Activated CD4-positive, alpha-beta T cell treated with anti-CD3 and anti-CD28 coated beads for 36 hours (primary cell): ENCODE measurements at regions of chr9 and their contacts with region 1.

Region 1: DNA sequence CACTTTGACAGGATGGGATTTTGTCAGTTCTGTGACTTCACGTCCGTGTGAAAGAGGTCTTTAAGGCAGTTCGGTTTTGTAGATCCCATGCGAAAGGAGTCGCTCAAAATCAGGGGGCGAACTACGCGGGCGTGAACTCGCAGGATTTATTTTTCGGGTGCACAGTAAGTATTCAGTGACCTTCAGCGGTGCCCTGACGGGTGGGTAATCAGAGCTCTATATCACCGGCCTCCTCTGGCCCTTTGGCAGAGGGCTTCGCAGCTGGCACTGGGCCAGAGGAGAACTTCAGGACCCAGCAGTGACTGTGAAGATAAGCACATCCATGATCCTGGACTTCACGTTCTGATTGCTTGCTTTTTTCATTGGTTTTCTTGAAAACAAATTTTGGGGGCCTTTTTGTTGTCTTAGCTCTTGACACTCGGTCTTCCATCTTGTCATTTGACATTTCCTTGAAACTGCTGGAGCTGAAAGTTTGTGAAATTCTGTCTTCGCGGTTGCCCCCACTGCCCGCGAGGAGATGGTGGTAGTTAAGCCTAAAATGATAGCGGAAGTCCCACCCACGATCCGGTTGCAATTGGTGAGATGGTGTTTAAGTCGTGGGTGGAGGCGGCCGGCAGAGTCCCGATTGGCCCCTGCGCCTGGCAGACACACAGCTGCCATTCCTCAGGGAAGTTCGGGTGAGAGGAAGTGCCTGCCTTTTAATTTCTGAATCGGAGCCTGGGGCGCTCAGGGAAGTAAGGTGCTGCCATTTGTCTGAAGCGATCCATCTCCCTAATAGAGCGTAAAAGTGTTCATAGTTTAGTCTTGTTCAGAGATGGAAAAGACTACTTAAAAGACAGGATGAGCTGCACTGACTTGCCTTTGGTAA is at the start of gene FAM120AOS:
- DNase-seq: peak; percentile 92
- ATAC-seq: peak; percentile 68
- H3K4me3 Mint-ChIP-seq: peak within 1 kb of the TSS; percentile 89
- H3K27ac Mint-ChIP-seq: peak within 1 kb of the TSS; percentile 96
- H3K4me1 Mint-ChIP-seq: peaks cover 47% of the 10 kb centered on the region
- H3K27me3 Mint-ChIP-seq: no peaks in the 10 kb centered on the region
- total RNA-seq, gene FAM120AOS: 38.7 to 43.1 TPM

Region 2: DNA sequence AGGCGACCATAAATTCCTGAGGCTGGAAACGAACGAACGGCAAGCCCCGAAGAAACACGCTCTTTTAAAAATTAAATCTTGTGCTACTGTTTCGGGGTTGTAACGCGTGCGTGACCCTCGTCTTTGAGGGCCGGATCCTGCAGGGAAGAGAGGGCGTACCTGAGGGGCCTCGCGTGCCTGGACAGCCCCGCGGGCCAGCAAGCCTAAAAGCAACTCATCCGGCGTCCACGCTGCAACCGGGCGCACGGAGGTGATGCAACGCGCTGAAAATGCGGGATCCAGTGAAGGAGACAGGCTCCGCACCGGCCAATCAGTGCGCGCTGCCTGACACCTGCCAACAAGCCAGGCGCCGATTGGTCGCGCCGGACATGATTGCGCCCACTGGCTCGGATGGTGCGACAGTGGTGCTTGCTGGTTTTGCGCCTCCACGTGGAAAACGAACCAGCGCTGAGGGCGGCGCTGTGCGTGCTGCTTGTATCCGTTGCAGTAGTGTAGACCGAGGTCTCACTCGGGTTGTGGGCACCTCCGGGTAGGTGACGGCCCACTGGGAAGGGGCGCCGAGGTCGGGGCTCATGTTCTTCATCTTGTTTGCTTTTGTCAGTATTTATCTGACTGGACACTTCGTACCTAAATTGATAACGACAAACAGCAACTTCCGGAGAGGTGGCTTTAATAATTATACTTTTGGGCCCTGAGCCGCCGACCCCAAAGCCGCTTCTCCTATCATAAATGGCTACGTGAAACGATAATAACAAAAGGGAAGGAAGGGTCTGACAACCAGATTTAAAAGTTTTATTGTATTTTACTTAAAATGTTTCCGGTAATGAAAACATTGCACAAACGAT is 1159.6 kb before region 1 on chr9 and contains the start of gene IARS1:
- CTCF ChIA-PET with region 1: no interaction called
- POLR2A ChIA-PET with region 1: no interaction called
- intact Hi-C with region 1: loop called in 1 of 2 experiments (anchors 10 kb)
- DNase-seq: peak; percentile 99
- ATAC-seq: peak; percentile 95
- H3K4me3 Mint-ChIP-seq: peak within 1 kb of the TSS; percentile 87
- H3K27ac Mint-ChIP-seq: peak within 1 kb of the TSS; percentile 98
- H3K4me1 Mint-ChIP-seq: peaks cover 56% of the 10 kb centered on the region
- H3K27me3 Mint-ChIP-seq: no peaks in the 10 kb centered on the region
- total RNA-seq, gene IARS1: 261 to 286 TPM

Region 3: GRCh38 chr9:92764988-92765936 is 688.0 kb before region 1 on chr9:
- CTCF ChIA-PET with region 1: no interaction called
- POLR2A ChIA-PET with region 1: no interaction called
- intact Hi-C with region 1: loop called in 1 of 2 experiments (anchors 2 kb)
- DNase-seq: peak; percentile 99
- ATAC-seq: peak; percentile 95
- H3K4me3 Mint-ChIP-seq: peak overlapping the region; percentile 89
- H3K27ac Mint-ChIP-seq: peak overlapping the region; percentile 90
- H3K4me1 Mint-ChIP-seq: peaks cover 47% of the 10 kb centered on the region
- H3K27me3 Mint-ChIP-seq: no peaks in the 10 kb centered on the region

Region 4: DNA sequence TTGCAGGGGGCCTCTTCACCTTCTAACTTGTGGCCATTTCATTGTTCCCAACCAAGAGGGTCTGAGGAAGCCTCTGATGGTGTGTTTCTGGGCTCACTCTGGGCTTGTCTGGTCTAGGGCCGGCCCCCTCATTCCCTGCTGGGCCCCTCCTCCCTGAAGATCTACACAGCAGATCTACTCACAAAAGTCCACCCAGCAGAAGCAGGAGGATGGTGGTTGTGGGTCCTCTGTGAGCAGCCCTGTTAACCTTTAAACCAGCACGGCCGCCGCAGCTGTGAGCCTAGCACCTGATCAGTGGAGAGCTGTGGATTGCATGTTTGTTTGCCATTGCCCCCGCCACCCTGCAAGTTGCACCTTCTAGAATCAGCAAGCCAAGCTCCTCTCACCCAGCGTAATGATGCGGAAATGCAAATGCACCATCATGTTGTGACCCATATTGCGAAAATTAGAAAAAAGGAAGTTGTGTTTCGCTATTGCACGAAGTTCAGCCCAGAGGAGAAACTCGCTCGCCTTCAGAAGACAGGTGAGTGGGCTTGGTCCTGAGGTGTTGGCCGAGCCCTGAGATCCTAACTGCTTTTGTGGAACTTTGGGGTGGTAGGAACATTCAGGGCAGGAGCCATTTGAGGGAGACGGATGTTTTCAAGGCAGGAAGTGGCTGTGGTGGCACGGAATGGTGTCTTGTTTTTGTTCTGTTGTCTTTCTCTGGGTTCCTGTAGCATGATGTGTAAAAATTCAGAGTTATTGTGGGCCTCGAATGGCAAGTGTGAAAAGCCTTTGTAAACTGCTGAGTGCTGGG is 489.3 kb before region 1 on chr9:
- CTCF ChIA-PET with region 1: no interaction called
- POLR2A ChIA-PET with region 1: interaction called, 4 read pairs
- intact Hi-C with region 1: loop called (anchors 5 to 10 kb)
- DNase-seq: peak; percentile 83
- ATAC-seq: peak; percentile 59
- H3K4me3 Mint-ChIP-seq: peak overlapping the region; percentile 89
- H3K27ac Mint-ChIP-seq: peak overlapping the region; percentile 99
- H3K4me1 Mint-ChIP-seq: peaks cover 56% of the 10 kb centered on the region
- H3K27me3 Mint-ChIP-seq: no peaks in the 10 kb centered on the region

Region 5: GRCh38 chr9:93134015-93134739 is 319.1 kb before region 1 on chr9 and contains the start of gene NINJ1:
- CTCF ChIA-PET with region 1: no interaction called
- POLR2A ChIA-PET with region 1: no interaction called
- intact Hi-C with region 1: loop called in 1 of 2 experiments (anchors 1 kb)
- DNase-seq: peak; percentile 95
- ATAC-seq: peak; percentile 83
- H3K4me3 Mint-ChIP-seq: peak within 1 kb of the TSS; percentile 88
- H3K27ac Mint-ChIP-seq: peak within 1 kb of the TSS; percentile 92
- H3K4me1 Mint-ChIP-seq: peaks cover 63% of the 10 kb centered on the region
- H3K27me3 Mint-ChIP-seq: no peaks in the 10 kb centered on the region
- total RNA-seq, gene NINJ1: 77.4 to 108 TPM

Region 6: DNA sequence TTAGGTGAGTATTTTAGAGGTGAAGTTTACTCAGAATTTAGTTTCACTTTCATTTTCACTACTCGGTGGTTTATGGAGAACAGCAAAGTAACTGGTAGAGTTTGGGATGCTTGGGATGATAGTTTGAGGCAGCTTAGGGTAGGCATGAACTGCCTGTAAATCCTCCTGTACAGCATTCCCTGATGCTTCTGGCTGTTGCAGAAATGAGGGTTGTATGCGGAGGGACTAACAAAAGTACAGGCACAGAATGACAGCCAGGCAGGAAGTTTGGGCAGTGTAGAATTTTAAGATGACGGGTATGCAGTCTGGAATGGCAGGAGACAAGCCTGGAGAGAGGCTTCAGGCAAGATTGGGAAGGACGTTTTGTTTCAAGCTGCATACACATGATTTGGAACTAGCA is 48.1 kb after region 1 on chr9:
- CTCF ChIA-PET with region 1: no interaction called
- POLR2A ChIA-PET with region 1: no interaction called
- intact Hi-C with region 1: loop called (anchors 2 to 5 kb)
- DNase-seq: no peak
- ATAC-seq: peak; percentile 43
- H3K4me3 Mint-ChIP-seq: peak overlapping the region; percentile 43
- H3K27ac Mint-ChIP-seq: peak overlapping the region; percentile 84
- H3K4me1 Mint-ChIP-seq: peaks cover 51% of the 10 kb centered on the region
- H3K27me3 Mint-ChIP-seq: no peaks in the 10 kb centered on the region

Region 7: DNA sequence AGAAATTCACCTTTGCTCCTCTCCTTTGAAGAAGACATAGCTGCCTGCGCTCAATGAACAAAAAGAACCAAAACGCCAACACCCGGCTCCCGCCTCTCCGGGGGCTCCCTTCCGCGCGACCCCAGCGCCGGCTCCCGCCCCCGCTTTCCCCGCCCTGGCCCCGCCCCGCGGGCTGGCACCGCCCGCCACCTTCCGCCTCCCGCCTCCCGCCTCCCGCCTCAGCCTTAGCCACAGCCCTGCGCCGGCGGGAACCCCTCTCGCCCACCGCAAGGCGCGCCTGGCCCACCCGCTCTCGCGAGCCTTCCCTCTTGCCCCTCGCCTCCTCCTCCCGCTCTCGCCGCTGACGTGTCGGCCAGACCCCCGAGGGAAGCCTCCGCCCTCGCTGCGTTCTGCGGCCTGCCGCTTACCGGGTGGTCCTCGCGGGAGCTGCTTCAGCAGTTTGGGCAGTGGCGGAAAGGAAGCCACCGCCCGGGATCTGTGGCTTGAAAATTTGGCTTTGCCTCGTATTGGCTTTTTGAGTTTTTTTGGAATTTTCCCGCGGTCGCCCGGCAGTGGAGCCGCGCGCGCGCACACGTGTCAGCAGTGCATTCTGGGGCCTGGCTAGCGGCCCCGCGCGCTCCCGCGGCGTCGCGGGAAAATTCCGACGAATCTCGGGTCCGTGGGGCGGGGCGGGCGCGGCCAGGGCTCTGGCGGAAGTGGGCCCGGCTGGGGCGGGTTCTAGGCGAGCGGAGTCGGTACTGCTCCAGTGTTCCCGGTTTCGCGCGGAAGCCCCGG is 1864.0 kb after region 1 on chr9 and contains the start of gene FANCC:
- CTCF ChIA-PET with region 1: no interaction called
- POLR2A ChIA-PET with region 1: no interaction called
- intact Hi-C with region 1: loop called in 1 of 2 experiments (anchors 5 kb)
- DNase-seq: peak; percentile 90
- ATAC-seq: peak; percentile 84
- H3K4me3 Mint-ChIP-seq: peak within 1 kb of the TSS; percentile 85
- H3K27ac Mint-ChIP-seq: peak within 1 kb of the TSS; percentile 95
- H3K4me1 Mint-ChIP-seq: peaks cover 15% of the 10 kb centered on the region
- H3K27me3 Mint-ChIP-seq: peaks cover 7% of the 10 kb centered on the region
- total RNA-seq, gene FANCC: 15.9 to 16.7 TPM